CD4-positive, alpha-beta T cell (primary cell): ENCODE measurements at regions of chr10 and their contacts with region 1.

Region 1: DNA sequence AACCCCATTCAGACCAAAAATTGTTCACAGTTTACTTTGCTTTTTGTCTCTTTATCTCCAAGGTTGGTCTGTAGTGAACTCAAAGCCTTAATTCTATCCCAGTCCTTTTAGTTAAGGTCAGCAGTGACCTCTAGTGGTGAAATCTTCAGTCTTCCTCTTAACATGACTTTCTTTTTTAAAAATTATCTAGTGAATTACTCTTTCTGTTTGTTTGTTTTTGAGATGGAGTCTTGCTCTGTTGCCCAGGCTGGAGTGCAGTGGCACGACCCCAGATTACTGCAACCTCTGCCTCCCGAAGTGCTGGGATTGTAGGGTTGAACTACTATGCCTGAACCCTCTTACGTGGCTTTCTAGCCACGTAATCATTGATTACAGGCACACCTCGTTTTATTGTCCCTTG is 25.0 kb downstream of the ZNF487 start:
- DNase-seq: peak in 5 of 14 experiments; percentile 12 to 89 (median 83)
- ATAC-seq: peak; percentile 87
- H3K4me3 ChIP-seq: no peak overlapping the region
- H3K4me3 Mint-ChIP-seq: no peak overlapping the region
- H3K27ac ChIP-seq: no peak overlapping the region
- H3K27ac Mint-ChIP-seq: peak overlapping the region; percentile 2
- H3K4me1 ChIP-seq: peaks cover 9% of the 10 kb centered on the region
- H3K4me1 Mint-ChIP-seq: peaks cover 20% of the 10 kb centered on the region
- H3K27me3 ChIP-seq: no peaks in the 10 kb centered on the region
- H3K27me3 Mint-ChIP-seq: no peaks in the 10 kb centered on the region
- CTCF ChIP-seq: peak; percentile 86

Region 2: DNA sequence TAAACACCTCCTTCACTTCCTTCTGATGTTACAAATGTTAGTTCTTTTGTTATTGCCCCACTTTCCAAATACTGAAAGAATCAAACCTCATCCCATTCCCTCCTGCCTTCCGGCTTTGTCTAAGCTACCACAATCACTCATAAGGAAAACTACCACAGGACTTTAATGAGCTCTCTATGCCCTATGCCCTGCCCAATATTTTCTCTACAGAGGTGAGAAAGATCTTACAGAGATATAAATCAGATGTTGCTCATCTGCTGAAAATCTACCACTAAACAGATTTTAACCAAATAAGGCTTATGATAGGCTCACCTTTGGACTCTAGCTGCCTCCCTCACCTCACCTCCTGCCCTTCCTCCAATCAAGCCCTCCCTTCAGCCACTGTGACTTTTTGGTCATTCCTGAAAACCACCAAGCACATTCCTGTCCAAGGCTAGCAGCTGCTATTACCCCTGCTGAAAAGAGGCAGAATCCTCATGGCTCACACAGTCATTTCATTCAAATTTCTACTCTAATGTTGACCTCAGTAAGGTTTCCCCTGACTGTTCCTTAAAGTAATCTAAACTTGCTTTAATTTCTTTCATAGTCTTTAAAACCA is 831.3 kb before region 1 on chr10:
- CTCF ChIA-PET with region 1: no interaction called
- POLR2A ChIA-PET with region 1: no interaction called
- intact Hi-C with region 1: no loop called
- DNase-seq: peak in 1 of 14 experiments; percentile 13
- ATAC-seq: no peak
- H3K4me3 ChIP-seq: no peak overlapping the region
- H3K4me3 Mint-ChIP-seq: no peak overlapping the region
- H3K27ac ChIP-seq: no peak overlapping the region
- H3K27ac Mint-ChIP-seq: peak overlapping the region; percentile 65
- H3K4me1 ChIP-seq: peaks cover 10% of the 10 kb centered on the region
- H3K4me1 Mint-ChIP-seq: peaks cover 59% of the 10 kb centered on the region
- H3K27me3 ChIP-seq: no peaks in the 10 kb centered on the region
- H3K27me3 Mint-ChIP-seq: no peaks in the 10 kb centered on the region
- CTCF ChIP-seq: no peak

Region 3: GRCh38 chr10:42753126-42753506 is 708.8 kb before region 1 on chr10:
- CTCF ChIA-PET with region 1: no interaction called
- POLR2A ChIA-PET with region 1: no interaction called
- intact Hi-C with region 1: loop called (anchors 5 kb)
- DNase-seq: peak; percentile 29 to 74 (median 54)
- ATAC-seq: peak; percentile 73
- H3K4me3 ChIP-seq: peak overlapping the region; percentile 56
- H3K4me3 Mint-ChIP-seq: peak overlapping the region; percentile 84
- H3K27ac ChIP-seq: no peak overlapping the region
- H3K27ac Mint-ChIP-seq: no peak overlapping the region
- H3K4me1 ChIP-seq: peaks cover 28% of the 10 kb centered on the region
- H3K4me1 Mint-ChIP-seq: peaks cover 13% of the 10 kb centered on the region
- H3K27me3 ChIP-seq: peaks cover 45 to 74% of the 10 kb centered on the region in 2 experiments
- H3K27me3 Mint-ChIP-seq: peaks cover 82% of the 10 kb centered on the region
- CTCF ChIP-seq: peak; percentile 66

Region 4: DNA sequence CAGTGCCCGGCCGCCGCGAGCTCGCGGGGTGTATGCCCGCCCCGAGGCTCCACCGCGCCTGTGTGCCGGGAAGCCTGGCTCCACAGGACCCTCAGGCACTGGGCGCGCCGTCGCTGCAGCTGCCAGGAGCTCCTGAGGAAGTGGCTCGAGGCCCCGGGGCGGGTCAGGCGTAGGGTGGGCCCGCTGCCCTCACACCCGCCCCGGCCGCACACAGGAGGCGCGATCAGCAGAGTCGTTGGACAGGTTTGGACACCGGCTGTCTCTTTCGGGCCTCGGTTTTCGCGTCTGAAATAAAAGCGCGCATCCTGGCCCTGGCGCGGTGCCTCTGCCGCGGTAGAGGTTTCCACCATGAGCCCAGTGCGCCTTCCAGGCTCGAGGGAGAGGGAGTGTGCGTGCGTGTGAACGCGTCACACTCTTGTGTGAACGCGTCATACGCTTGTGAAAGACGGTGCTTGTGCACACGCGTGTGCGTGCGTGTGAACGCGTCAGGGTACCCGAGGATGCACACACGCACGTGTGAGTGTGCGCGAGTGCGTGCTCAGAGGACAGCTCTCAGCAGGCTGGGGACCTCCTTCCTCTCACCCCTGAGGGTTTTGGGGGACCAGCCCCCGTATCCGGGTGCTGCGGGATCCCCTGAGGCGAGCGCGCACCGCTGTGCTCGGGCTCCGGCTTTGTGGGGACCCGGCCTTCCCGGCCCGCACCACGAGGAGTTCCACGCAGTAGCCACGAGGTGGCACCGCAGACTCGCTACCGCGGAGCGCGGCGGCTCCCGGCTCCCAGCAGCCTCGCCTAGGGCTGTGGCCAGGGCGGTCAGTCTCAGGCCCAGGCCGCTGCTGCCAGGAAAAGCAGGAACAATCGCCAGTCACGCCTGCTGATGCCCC is 595.6 kb before region 1 on chr10:
- CTCF ChIA-PET with region 1: no interaction called
- POLR2A ChIA-PET with region 1: no interaction called
- intact Hi-C with region 1: loop called (anchors 5 to 10 kb)
- DNase-seq: peak in 12 of 14 experiments; percentile 7 to 74 (median 31)
- ATAC-seq: peak; percentile 46
- H3K4me3 ChIP-seq: peak overlapping the region; percentile 26
- H3K4me3 Mint-ChIP-seq: no peak overlapping the region
- H3K27ac ChIP-seq: no peak overlapping the region
- H3K27ac Mint-ChIP-seq: no peak overlapping the region
- H3K4me1 ChIP-seq: peaks cover 9% of the 10 kb centered on the region
- H3K4me1 Mint-ChIP-seq: peaks cover 5% of the 10 kb centered on the region
- H3K27me3 ChIP-seq: peaks cover 10 to 12% of the 10 kb centered on the region in 2 experiments
- H3K27me3 Mint-ChIP-seq: peaks cover 43% of the 10 kb centered on the region
- CTCF ChIP-seq: peak; percentile 40

Region 5: GRCh38 chr10:43265799-43266721 is 195.9 kb before region 1 on chr10:
- CTCF ChIA-PET with region 1: no interaction called
- POLR2A ChIA-PET with region 1: no interaction called
- intact Hi-C with region 1: loop called (anchors 1 to 5 kb)
- DNase-seq: peak; percentile 28 to 71 (median 44)
- ATAC-seq: peak; percentile 81
- H3K4me3 ChIP-seq: peak overlapping the region; percentile 53
- H3K4me3 Mint-ChIP-seq: peak overlapping the region; percentile 89
- H3K27ac ChIP-seq: no peak overlapping the region
- H3K27ac Mint-ChIP-seq: peak overlapping the region; percentile 47
- H3K4me1 ChIP-seq: peaks cover 19% of the 10 kb centered on the region
- H3K4me1 Mint-ChIP-seq: peaks cover 5% of the 10 kb centered on the region
- H3K27me3 ChIP-seq: peaks cover 22 to 42% of the 10 kb centered on the region in 2 experiments
- H3K27me3 Mint-ChIP-seq: peaks cover 58% of the 10 kb centered on the region
- CTCF ChIP-seq: no peak

Region 6: GRCh38 chr10:43348511-43349312 is 113.2 kb before region 1 on chr10:
- CTCF ChIA-PET with region 1: interaction called, 4 read pairs
- POLR2A ChIA-PET with region 1: no interaction called
- intact Hi-C with region 1: loop called (anchors 1 to 2 kb)
- DNase-seq: peak; percentile 77 to 94 (median 85)
- ATAC-seq: peak; percentile 100
- H3K4me3 ChIP-seq: no peak overlapping the region
- H3K4me3 Mint-ChIP-seq: no peak overlapping the region
- H3K27ac ChIP-seq: no peak overlapping the region
- H3K27ac Mint-ChIP-seq: no peak overlapping the region
- H3K4me1 ChIP-seq: peaks cover 35% of the 10 kb centered on the region
- H3K4me1 Mint-ChIP-seq: peaks cover 10% of the 10 kb centered on the region
- H3K27me3 ChIP-seq: peaks cover 9 to 13% of the 10 kb centered on the region in 2 experiments
- H3K27me3 Mint-ChIP-seq: peaks cover 18% of the 10 kb centered on the region
- CTCF ChIP-seq: peak; percentile 90

Region 7: GRCh38 chr10:43502931-43503330 is 41.0 kb after region 1 on chr10:
- CTCF ChIA-PET with region 1: no interaction called
- POLR2A ChIA-PET with region 1: no interaction called
- intact Hi-C with region 1: no loop called
- DNase-seq: no peak
- ATAC-seq: no peak
- H3K4me3 ChIP-seq: no peak overlapping the region
- H3K4me3 Mint-ChIP-seq: no peak overlapping the region
- H3K27ac ChIP-seq: no peak overlapping the region
- H3K27ac Mint-ChIP-seq: no peak overlapping the region
- H3K4me1 ChIP-seq: no peaks in the 10 kb centered on the region
- H3K4me1 Mint-ChIP-seq: no peaks in the 10 kb centered on the region
- H3K27me3 ChIP-seq: no peaks in the 10 kb centered on the region
- H3K27me3 Mint-ChIP-seq: no peaks in the 10 kb centered on the region
- CTCF ChIP-seq: no peak